Left cardiac atrium (tissue), 4 donors: ENCODE measurements at regions of chr18 and their contacts with region 1.

Region 1: GRCh38 chr18:46518438-46518837 is 138.6 kb downstream of the LOXHD1 start:
- DNase-seq: peak; percentile 36
- ATAC-seq: peak; percentile 82 to 84

Region 2: DNA sequence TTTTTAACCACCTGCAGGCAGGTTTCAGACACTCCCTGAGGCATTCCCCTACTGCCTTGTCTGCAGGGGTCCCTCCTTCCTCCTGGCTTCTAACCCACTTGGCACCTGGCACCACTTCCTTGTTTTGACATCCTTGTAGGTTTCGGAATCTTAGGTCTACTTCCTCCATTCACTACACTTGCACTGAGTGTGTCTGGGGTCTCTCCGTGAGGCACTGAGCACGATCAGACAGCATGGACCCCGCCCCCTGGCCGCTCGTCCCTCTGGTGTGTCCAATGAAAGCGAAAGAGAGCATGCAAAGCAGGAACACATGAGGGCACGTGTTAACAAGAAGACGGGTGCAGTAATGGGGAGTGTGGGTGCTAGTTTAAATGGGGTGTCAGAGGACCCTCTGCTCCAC is 350.5 kb before region 1 on chr18:
- intact Hi-C with region 1: loop called in 1 of 2 experiments (anchors 10 kb)
- DNase-seq: no peak
- ATAC-seq: no peak

Region 3: DNA sequence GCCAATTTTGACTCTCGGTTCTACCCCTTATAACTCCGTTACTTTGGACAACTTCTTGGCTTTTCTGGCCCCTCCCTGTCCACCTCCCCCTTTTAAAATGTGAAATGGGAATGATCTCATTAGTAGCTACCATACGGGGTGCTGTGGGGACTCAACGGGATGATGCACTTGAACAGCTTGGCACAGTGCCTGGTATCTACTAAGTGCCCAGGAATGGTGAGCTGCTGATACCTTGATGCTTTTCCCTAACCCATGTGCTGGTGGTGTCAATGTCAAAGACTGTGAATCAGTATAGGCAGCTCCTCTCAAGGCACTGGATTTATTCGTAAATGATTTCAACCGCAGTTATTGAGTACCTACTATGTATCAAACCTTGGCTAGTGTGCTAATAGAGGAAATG is 65.6 kb before region 1 on chr18:
- intact Hi-C with region 1: loop called in 1 of 2 experiments (anchors 10 kb)
- DNase-seq: no peak
- ATAC-seq: no peak